ENCODE measurements at regions of chr2 and their contacts with region 1.

Region 1: DNA sequence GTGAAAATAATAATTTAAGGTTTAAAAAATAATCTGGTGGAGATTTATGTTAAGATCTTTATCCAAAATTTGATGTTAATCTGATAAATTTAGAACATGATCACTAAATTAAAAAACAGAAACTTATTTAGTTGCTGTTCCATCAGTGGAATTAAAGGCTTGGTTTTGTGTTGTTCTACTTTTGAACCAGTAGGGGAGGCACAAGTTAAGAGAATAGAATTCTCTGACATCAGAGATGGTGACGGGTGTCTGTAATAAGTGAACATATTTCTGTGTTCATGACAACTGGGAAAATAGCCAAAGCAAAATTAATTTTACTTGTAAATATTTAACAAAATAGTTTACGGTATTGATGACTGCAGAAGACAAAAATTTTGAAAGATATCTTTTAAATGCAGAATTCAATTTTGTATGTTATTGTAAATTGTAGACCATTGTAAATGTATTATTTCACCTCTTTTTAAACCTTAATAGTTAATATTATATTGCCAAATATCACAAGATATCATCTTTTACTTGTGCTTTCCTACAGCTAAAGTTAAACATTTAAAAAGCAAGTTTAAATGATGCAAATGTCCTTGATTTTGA is 106.0 kb downstream of the UBR3 start:
- DNase-seq: no peak
- ATAC-seq: no peak
- H3K4me3 ChIP-seq: no peak overlapping the region
- H3K27ac ChIP-seq: no peak overlapping the region
- H3K4me1 ChIP-seq: no peaks in the 10 kb centered on the region
- H3K27me3 ChIP-seq: no peaks in the 10 kb centered on the region
- CTCF ChIP-seq: peak; percentile 18 to 55 (median 43)
- POLR2A ChIP-seq: no peak

Region 2: DNA sequence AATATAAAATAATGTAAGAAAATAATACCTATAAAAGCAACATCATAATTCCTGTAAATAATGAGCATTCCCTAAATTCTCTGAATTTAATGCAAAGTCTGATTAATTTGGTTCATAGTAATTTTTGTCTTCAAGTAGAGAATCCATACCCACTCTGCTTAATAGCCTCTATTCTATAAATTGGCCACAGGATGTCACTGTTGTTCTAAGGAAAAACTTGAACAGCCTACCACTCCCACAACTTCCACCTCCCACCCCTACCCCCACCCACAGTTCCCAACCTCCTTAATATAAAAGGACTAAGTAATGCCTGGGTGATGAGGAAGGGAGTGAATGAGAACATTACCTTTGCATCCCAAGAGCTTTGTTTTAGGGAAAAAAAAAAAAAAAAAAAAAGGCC is 481.1 kb before region 1 on chr2:
- in situ Hi-C with region 1: no loop called
- intact Hi-C with region 1: loop called (anchors 2 kb)
- DNase-seq: no peak
- ATAC-seq: peak; percentile 58 to 76
- H3K4me3 ChIP-seq: no peak overlapping the region
- H3K27ac ChIP-seq: no peak overlapping the region
- H3K4me1 ChIP-seq: no peaks in the 10 kb centered on the region
- H3K27me3 ChIP-seq: no peaks in the 10 kb centered on the region
- CTCF ChIP-seq: peak in 4 of 5 experiments; percentile 31 to 55 (median 50)
- POLR2A ChIP-seq: no peak

Region 3: GRCh38 chr2:170928824-170929685 is 995.8 kb after region 1 on chr2 and contains the start of gene GORASP2:
- in situ Hi-C with region 1: no loop called
- intact Hi-C with region 1: no loop called
- DNase-seq: peak; percentile 96 to 98
- ATAC-seq: peak; percentile 93 to 94
- H3K4me3 ChIP-seq: peak within 1 kb of the TSS; percentile 77 to 91 (median 84)
- H3K27ac ChIP-seq: peak within 1 kb of the TSS; percentile 86 to 95 (median 92)
- H3K4me1 ChIP-seq: peaks cover 27 to 37% of the 10 kb centered on the region in 2 donors
- H3K27me3 ChIP-seq: no peaks in the 10 kb centered on the region
- CTCF ChIP-seq: peak; percentile 92 to 98 (median 97)
- POLR2A ChIP-seq: peak; percentile 87 to 89
- total RNA-seq, gene GORASP2: 53.9 to 67.0 (median 56.3) TPM

Measured in gastrocnemius medialis (tissue), 4 donors.